ENCODE measurements at regions of chr10 and their contacts with region 1.

Region 1: GRCh38 chr10:92517034-92517655 is 56.7 kb downstream of the IDE start:
- DNase-seq: no peak
- H3K4me3 ChIP-seq: no peak overlapping the region
- CTCF ChIP-seq: peak; percentile 61

Region 2: GRCh38 chr10:92502296-92502808 is 14.8 kb before region 1 on chr10:
- CTCF ChIA-PET with region 1: interaction called, 14 read pairs
- POLR2A ChIA-PET with region 1: no interaction called
- DNase-seq: no peak
- H3K4me3 ChIP-seq: no peak overlapping the region
- CTCF ChIP-seq: no peak

Region 3: DNA sequence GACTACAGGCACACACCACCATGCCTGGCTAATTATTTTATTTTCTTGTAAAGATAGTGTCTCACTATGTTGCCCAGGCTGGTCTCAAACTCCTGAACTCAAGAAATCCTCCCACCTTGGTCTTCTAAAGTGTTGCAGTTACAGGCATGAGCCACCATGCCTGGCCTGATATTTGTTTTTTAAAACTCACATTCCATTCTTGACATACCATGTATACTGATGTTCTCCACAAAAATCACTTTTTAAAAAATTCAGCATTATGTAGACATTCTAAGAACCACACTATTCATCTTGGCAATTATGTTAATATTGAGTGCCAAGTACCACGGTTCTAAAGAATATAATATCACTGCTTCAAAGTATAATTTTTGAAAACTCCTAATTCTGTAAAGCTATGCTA is 13.3 kb after region 1 on chr10:
- CTCF ChIA-PET with region 1: interaction called, 33 read pairs
- POLR2A ChIA-PET with region 1: no interaction called
- DNase-seq: peak; percentile 21
- H3K4me3 ChIP-seq: no peak overlapping the region
- CTCF ChIP-seq: no peak

Region 4: GRCh38 chr10:92544296-92544695 is 27.2 kb after region 1 on chr10:
- CTCF ChIA-PET with region 1: interaction called, 18 read pairs
- POLR2A ChIA-PET with region 1: no interaction called
- DNase-seq: no peak
- H3K4me3 ChIP-seq: no peak overlapping the region
- CTCF ChIP-seq: no peak

Region 5: DNA sequence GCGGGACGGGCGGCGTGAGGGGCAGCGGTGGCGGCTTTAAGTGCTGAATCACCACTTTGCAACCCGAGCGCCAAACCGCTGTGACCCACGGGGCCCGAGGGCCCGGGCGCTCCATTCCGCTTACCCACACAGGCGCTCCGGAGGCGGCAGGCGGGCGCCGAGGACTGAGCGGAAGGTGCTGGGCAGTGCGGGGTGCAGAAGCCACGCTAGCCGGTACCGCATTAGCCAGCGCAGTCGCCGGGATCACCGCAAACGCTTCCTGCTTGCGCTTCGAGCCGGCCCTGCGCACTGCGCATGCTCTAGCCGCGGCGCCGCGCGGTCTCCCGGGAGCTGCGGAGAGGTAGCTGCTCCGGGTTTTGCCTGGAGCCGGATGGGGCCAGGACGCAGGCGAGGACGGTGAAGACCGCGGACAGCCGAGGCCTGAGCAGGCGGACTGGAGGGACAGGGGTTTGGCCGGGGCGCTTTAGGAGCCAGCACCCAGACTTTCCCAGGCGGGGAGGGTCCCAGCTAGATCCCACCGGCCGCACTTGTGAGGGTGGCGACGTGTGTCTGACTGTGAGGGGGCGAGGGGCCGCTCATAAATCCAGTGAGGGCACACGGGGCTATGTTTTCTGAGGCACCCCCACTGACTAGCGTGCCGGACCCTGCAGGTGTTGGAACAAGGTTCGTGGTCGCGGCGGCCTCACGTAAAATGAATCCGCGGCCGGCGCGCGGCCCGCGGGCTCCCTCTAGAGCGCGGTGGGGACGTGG is 56.8 kb after region 1 on chr10 and contains the start of gene IDE:
- CTCF ChIA-PET with region 1: interaction called, 150 read pairs
- POLR2A ChIA-PET with region 1: interaction called, 5 read pairs
- DNase-seq: no peak
- H3K4me3 ChIP-seq: peak within 1 kb of the TSS; percentile 81
- CTCF ChIP-seq: peak; percentile 92

Region 6: DNA sequence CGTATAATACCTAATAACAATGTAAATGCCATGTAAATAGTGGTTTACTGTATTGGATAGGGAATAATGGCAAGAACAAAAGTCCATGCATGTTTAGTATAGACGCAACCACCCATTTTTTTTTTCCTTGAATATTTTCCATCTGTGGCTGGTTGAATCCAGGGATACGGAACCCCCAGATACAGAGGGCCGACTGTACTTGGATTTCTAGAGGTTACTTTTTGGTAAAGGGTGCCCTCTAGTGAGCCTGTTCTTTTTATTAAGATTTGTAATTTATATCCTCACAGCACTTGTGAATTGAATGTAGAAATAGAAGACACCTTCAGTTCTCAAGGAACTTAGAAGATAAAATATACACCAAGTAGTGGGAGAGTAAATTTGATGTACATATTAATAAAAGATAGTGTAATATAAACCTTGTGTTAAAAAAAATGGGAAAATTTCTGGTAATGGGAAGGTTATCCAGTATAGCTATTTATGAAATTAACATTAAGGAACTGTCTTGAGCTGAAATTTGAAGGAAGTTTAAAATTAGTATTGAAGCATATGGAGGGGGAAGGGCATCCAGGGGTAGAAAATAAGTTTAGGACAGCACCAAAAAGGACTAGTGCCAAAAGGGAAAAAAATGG is 363.2 kb after region 1 on chr10:
- CTCF ChIA-PET with region 1: interaction called, 19 read pairs
- POLR2A ChIA-PET with region 1: no interaction called
- DNase-seq: no peak
- H3K4me3 ChIP-seq: no peak overlapping the region
- CTCF ChIP-seq: peak; percentile 22

Measured in AG04449 (cell line).